ENCODE measurements at regions of chr2 and their contacts with region 1.

Region 1: DNA sequence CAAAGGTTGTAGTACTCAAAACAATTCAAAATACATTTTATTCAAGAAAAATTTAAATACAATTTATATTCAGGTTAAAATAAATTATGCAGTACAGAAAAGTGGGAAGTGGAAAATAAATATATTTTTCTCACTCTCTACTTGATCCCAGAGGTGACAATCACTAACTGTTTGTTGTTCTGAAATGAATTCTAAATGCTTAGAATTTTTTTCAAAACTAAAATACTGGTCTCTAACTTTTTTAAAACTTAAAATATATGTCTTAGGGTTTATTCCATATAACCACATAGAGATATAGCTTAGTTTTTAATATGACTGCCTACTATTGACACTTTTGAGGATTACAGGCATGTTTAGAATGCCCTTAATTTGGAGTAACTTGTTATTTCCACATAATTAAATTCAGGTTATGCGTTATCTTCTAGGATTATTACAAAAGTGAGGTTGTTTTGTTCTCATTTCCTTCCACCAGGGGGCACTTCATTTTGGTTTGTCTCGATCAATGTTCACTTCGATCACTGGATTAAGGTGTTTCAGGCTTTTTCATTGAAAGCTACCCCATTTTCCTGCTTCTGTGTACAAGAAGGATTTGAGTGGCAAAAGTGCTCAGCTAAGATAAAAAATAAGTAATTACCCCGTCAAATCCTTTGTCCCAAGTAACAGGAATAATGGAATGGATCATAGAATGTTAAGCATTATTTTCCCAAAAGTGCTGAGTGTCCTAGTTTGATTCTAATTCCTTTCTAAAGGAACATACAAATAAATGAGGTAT is 27.1 kb upstream of the TFPI start:
- DNase-seq: peak; percentile 6 to 34
- H3K4me3 ChIP-seq: no peak overlapping the region
- H3K27ac ChIP-seq: no peak overlapping the region
- H3K4me1 ChIP-seq: no peaks in the 10 kb centered on the region
- H3K27me3 ChIP-seq: no peaks in the 10 kb centered on the region
- CTCF ChIP-seq: peak; percentile 75

Region 2: GRCh38 chr2:186862869-186863709 is 718.2 kb before region 1 on chr2:
- CTCF ChIA-PET with region 1: no interaction called
- POLR2A ChIA-PET with region 1: no interaction called
- intact Hi-C with region 1: loop called (anchors 5 kb)
- DNase-seq: no peak
- H3K4me3 ChIP-seq: no peak overlapping the region
- H3K27ac ChIP-seq: no peak overlapping the region
- H3K4me1 ChIP-seq: no peaks in the 10 kb centered on the region
- H3K27me3 ChIP-seq: no peaks in the 10 kb centered on the region
- CTCF ChIP-seq: peak; percentile 74

Region 3: GRCh38 chr2:187547353-187547979 is 33.8 kb before region 1 on chr2:
- CTCF ChIA-PET with region 1: interaction called, 18 read pairs
- POLR2A ChIA-PET with region 1: no interaction called
- intact Hi-C with region 1: no loop called
- DNase-seq: peak; percentile 42 to 66
- H3K4me3 ChIP-seq: no peak overlapping the region
- H3K27ac ChIP-seq: 0 out of 2 replicates have a peak overlapping the region, but pooled peaks have one; percentile 23
- H3K4me1 ChIP-seq: no peaks in the 10 kb centered on the region
- H3K27me3 ChIP-seq: no peaks in the 10 kb centered on the region
- CTCF ChIP-seq: no peak

Region 4: DNA sequence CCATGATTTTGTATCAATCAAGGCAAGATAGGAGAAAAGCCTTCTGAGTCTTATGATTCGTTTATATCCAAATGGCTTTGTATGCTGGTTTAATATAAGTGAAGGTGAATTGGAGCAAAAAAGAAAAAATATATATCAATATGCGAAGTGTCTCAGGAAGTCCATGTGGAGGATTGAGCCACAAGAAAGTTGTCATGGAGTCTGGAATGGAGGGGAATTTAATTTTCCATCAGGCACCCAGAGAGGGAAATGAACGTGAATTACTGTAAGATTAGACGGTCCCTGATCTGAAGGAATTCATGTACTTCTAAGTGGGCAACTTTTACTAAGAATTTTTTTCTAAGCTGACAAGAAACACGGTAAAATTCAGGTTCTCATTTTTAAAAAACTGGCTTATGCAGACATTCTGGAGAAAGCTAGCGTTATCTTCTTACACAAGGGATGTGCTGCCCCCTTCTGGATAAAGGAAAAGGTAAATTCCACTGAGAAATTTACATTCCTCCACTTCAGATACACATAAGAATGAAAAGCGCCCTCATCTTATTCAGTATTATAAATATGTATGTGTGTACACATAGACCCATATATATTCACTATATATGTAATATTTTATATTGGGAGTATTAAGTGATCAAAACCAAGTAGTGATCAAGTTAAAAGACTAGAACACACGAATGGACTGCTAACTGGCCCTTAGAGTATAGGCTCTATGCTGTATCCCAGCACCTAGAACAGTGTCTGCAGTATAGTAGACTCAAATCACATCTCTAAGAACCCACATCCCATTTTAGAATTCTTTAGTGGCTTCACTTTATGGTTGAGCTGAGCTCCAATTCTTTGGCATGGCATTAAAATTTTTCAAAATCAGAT is 261.9 kb after region 1 on chr2:
- CTCF ChIA-PET with region 1: no interaction called
- POLR2A ChIA-PET with region 1: no interaction called
- intact Hi-C with region 1: loop called (anchors 1 kb)
- DNase-seq: peak in 1 of 2 experiments; percentile 0
- H3K4me3 ChIP-seq: no peak overlapping the region
- H3K27ac ChIP-seq: no peak overlapping the region
- H3K4me1 ChIP-seq: no peaks in the 10 kb centered on the region
- H3K27me3 ChIP-seq: no peaks in the 10 kb centered on the region
- CTCF ChIP-seq: peak; percentile 70

Region 5: DNA sequence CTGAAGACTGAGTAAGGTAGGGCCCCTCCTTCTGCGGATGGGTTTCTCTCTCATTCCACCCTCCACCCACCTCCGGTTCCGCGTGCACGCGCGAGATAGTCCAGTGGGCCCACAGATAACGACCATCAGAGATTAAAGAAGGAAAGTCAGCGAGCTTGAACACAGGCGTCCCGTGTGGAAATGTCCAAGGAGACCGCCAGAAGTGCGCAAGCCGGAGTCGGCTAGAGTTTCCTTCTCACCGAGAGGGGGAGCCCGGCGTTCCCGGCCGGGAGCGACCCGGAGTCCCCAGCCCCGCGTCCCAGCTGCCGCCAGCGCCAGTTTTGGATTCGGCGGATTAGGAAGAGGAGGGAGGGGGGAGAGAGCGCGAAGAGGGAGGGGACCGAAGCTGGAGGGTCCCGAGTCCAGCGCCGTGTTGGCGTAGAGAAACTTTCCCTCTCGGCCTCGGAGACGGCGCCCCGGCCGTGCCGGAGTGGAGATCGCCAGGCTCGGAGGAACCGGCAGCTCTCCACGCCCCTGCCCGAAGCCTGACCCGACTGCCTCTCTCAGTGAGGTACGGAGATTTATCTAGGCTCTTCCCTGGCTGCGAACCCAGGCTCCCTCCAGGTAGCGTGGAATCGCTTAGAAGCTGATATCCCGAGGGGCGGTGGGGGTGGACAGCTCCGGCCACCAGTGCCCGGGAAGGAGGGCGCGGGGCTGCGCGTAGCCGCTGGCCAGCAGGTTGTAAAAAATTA is 710.5 kb after region 1 on chr2 and contains the start of gene GULP1:
- CTCF ChIA-PET with region 1: no interaction called
- POLR2A ChIA-PET with region 1: no interaction called
- intact Hi-C with region 1: no loop called
- DNase-seq: peak; percentile 53 to 59
- H3K4me3 ChIP-seq: peak within 1 kb of the TSS; percentile 83
- H3K27ac ChIP-seq: peak within 1 kb of the TSS; percentile 80
- H3K4me1 ChIP-seq: peaks cover 22% of the 10 kb centered on the region
- H3K27me3 ChIP-seq: no peaks in the 10 kb centered on the region
- CTCF ChIP-seq: peak; percentile 57; the same call in 1 of the 2 replicates
- total RNA-seq, gene GULP1: 31.5 and 38.0 TPM in 2 replicates

Region 6: DNA sequence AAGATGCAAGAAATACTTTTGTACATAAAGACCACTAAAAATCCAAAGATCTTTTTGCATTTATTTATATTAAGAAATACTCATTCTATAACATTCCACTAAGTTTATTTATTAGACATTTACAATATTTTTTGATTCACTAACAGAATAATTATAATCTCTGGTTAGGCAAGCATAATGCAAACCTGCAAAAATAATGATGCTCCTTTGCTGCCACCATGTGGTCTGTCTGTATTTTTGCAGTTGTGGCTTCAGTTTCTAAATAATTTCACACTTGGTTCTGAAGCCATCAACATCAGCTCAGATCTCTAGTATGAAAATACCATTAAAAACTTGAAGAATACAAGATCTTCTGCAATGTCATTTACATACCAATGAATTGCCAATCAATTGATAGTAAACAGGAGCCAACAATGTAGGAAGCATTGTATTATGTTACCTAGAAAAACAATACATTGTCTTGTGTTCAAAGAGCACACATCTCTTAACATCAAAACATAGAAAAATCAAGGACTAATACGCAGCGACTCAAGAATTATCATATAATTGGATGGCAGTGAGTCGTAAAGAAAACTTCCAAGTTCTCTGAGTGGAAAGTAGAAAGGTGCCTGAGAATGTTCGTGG is 1831.1 kb after region 1 on chr2:
- CTCF ChIA-PET with region 1: no interaction called
- POLR2A ChIA-PET with region 1: no interaction called
- intact Hi-C with region 1: loop called (anchors 10 kb)
- DNase-seq: peak in 1 of 2 experiments; percentile 3
- H3K4me3 ChIP-seq: no peak overlapping the region
- H3K27ac ChIP-seq: no peak overlapping the region
- H3K4me1 ChIP-seq: 0 out of 2 replicates have a peak, but pooled peaks cover 4% of the 10 kb centered on the region
- H3K27me3 ChIP-seq: no peaks in the 10 kb centered on the region
- CTCF ChIP-seq: peak; percentile 74